ENCODE measurements at regions of chr4 and their contacts with region 1.

Region 1: GRCh38 chr4:1192091-1192492 is 19.7 kb upstream of the SPON2 start:
- DNase-seq: peak; percentile 44
- H3K4me3 ChIP-seq: no peak overlapping the region
- H3K27ac ChIP-seq: no peak overlapping the region
- H3K4me1 ChIP-seq: no peaks in the 10 kb centered on the region
- H3K27me3 ChIP-seq: peaks cover 4% of the 10 kb centered on the region
- CTCF ChIP-seq: no peak

Region 2: DNA sequence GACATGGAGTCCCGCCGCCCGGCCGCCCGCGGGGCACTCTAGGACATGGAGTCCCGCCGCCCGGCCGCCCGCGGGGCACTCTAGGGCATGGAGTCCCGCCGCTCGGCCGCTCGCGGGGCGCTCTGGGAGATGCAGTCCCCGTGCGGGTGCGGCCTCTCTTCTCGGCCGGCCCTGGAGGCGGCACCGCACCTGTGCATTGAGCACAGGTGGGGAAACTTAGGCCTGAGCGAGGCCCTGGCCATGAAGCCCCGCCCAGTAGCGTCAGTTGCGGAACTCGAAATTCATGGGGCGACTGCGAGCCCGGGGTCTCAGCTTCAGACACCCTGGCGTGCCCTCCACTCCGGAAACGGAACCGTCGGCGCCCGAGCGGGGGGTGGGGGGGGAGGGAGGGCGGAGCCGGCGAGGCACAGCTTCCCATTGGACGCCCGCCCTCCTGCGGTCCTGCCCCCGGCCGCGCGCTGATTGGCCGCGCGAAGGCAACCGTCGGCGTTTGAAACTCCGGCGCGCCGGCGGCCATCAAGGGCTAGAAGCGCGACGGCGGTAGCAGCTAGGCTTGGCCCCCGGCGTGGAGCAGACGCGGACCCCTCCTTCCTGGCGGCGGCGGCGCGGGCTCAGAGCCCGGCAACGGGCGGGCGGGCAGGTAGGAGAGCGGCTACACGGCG is 529.0 kb after region 1 on chr4 and contains the starts of genes TACC3 and TMEM129:
- CTCF ChIA-PET with region 1: no interaction called
- POLR2A ChIA-PET with region 1: interaction called, 14 read pairs
- intact Hi-C with region 1: no loop called
- DNase-seq: peak; percentile 95
- H3K4me3 ChIP-seq: peak within 1 kb of the TSS; percentile 99
- H3K27ac ChIP-seq: peak within 1 kb of the TSS; percentile 90
- H3K4me1 ChIP-seq: no peaks in the 10 kb centered on the region
- H3K27me3 ChIP-seq: no peaks in the 10 kb centered on the region
- CTCF ChIP-seq: no peak
- total RNA-seq, gene TACC3: 224 and 246 TPM in 2 replicates
- total RNA-seq, gene TMEM129: 28.8 and 33.4 TPM in 2 replicates